ENCODE measurements at regions of chr7 and their contacts with region 1.

Region 1: DNA sequence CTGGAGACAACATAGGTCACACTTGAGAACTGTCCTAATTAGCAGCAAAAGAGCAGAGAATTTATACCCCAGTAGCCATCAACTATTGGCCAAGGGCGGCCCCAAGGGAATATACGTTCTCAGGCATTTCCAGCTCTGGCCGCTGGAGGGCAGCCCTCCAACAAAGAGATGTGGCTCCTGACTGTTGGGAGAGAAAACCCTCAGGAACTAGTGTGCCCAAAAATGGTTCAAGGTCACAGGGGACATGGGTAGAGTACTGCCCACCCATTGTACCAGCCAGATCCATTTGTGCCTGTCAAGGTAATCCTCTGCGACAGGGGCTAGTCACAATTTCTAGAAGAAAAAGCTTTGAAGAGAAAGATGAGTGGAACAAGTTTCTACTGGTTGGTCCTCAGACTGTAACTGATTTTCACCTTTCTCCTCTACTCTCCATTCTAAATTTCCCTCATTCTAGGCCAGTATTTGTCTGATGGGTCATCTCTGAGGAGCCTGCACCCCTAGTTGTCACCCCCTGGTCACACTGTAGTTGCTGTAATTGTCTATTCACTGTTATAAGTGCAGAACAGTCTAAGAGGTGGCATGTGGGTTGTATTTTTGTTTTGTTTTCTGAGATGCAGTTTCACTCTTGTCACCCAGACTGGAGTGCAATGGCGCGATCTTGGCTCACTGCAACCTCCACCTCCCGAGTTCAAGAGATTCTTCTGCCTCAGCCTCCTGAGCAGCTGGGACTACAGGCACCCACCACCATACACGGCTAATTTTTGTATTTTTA is 14.7 kb upstream of the C7orf33 start:
- DNase-seq: peak; percentile 76
- H3K4me3 Mint-ChIP-seq: no peak overlapping the region
- H3K27ac Mint-ChIP-seq: no peak overlapping the region
- H3K4me1 Mint-ChIP-seq: no peaks in the 10 kb centered on the region
- H3K27me3 Mint-ChIP-seq: no peaks in the 10 kb centered on the region
- CTCF ChIP-seq: peak; percentile 87

Region 2: GRCh38 chr7:148398844-148399373 is 176.9 kb before region 1 on chr7:
- CTCF ChIA-PET with region 1: no interaction called
- POLR2A ChIA-PET with region 1: no interaction called
- intact Hi-C with region 1: no loop called
- DNase-seq: peak; percentile 3
- H3K4me3 Mint-ChIP-seq: no peak overlapping the region
- H3K27ac Mint-ChIP-seq: no peak overlapping the region
- H3K4me1 Mint-ChIP-seq: peaks cover 6% of the 10 kb centered on the region
- H3K27me3 Mint-ChIP-seq: peaks cover 18% of the 10 kb centered on the region
- CTCF ChIP-seq: no peak

Region 3: GRCh38 chr7:148503875-148504487 is 71.8 kb before region 1 on chr7:
- CTCF ChIA-PET with region 1: interaction called, 8 read pairs
- POLR2A ChIA-PET with region 1: no interaction called
- intact Hi-C with region 1: loop called (anchors 1 kb)
- DNase-seq: peak; percentile 42
- H3K4me3 Mint-ChIP-seq: no peak overlapping the region
- H3K27ac Mint-ChIP-seq: no peak overlapping the region
- H3K4me1 Mint-ChIP-seq: peaks cover 4% of the 10 kb centered on the region
- H3K27me3 Mint-ChIP-seq: peaks cover 22% of the 10 kb centered on the region
- CTCF ChIP-seq: peak; percentile 56

Region 4: DNA sequence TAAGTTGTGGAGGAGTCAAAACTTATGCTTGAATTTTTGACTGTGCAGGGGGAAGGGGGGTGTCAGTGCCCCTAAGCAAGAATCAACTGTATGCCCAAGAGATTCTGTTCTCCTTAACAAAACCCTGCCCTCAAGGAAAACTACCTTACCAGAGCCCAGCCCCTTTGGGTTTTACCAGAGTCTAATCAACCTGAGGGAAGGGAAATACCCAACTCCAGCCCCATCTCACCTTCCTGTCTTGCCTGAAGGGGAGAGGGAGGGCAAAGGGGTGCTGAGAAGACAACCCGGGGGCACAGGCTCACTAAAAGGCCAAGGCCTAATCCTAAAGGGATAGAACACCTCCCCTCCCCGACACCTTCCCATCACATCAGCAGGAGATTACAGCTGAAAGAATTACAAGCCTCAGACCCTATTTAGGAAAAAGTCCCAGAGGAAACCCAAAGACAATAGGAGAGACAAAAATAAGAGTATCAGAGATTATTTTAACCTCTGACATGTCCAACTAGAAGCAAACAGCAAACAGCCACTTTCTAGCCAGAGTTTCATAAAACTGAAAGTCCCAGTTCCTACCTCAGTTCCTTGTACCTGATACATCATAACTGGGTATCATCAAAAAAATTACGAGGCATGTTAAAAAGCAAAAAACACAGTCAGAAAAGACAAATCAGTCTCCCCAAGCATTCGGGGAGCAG is 12.1 kb before region 1 on chr7:
- CTCF ChIA-PET with region 1: interaction called, 33 read pairs
- POLR2A ChIA-PET with region 1: interaction called, 5 read pairs
- intact Hi-C with region 1: no loop called
- DNase-seq: no peak
- H3K4me3 Mint-ChIP-seq: peak overlapping the region; percentile 44
- H3K27ac Mint-ChIP-seq: peak overlapping the region; percentile 84
- H3K4me1 Mint-ChIP-seq: peaks cover 9% of the 10 kb centered on the region
- H3K27me3 Mint-ChIP-seq: no peaks in the 10 kb centered on the region
- CTCF ChIP-seq: no peak

Region 5: DNA sequence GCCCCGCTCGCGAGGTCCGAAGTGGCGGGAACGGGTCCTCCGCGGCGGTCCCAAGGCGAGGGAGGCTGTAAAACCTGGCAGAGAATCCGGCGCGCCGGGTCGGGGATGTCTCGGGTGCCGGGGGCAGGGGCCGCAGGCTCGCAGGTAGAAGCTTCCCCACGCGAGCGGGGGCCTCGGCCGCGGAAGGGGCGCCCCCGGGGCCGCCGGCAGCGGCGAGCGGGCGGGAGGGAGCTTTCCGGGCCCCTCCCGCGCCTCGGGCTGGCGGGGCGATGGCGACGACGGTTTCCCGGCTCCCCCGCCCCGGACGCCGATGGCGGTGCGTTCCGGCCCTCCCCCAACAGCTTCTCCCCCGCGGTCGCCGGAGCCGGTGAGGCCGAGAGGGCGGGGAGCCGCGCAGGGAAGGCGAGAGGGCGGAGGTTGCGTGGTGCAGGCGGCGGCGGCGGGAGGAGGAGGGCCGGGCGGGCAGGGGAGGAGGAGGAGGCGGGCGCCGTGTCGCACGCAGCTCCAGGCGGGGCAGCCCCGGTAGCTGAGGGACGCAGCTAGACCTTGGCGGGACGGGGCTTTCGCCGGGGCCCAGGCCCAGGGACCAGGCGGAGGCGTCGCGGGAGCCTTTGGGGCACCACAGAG is 122.7 kb after region 1 on chr7 and contains the start of gene CUL1:
- CTCF ChIA-PET with region 1: interaction called, 4 read pairs
- POLR2A ChIA-PET with region 1: no interaction called
- intact Hi-C with region 1: loop called (anchors 5 kb)
- DNase-seq: peak; percentile 83
- H3K4me3 Mint-ChIP-seq: peak within 1 kb of the TSS; percentile 85
- H3K27ac Mint-ChIP-seq: peak within 1 kb of the TSS; percentile 71
- H3K4me1 Mint-ChIP-seq: peaks cover 46% of the 10 kb centered on the region
- H3K27me3 Mint-ChIP-seq: no peaks in the 10 kb centered on the region
- CTCF ChIP-seq: no peak
- total RNA-seq, gene CUL1: 41.2 and 49.2 TPM in 2 replicates

Region 6: DNA sequence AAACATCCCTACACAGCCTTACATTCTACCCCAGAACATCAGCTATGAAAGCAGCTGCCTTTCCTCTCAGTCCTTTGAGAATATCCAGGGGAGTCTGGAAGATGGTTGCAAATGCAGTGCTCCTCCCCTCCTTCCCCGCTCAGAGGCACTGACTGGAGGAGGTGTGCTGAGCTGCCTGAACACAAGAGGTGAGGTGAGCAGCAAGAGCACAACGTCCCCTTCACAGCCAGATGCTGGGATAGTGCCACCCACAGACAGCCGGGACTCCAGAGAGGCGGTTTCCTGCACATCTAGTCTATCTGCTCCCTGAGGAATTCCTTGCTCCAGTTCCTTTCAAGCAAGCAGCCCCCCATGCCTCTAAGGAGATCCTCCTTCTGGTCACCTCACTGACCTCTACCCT is 234.0 kb after region 1 on chr7:
- CTCF ChIA-PET with region 1: interaction called, 3 read pairs
- POLR2A ChIA-PET with region 1: no interaction called
- intact Hi-C with region 1: loop called (anchors 10 kb)
- DNase-seq: no peak
- H3K4me3 Mint-ChIP-seq: no peak overlapping the region
- H3K27ac Mint-ChIP-seq: no peak overlapping the region
- H3K4me1 Mint-ChIP-seq: no peaks in the 10 kb centered on the region
- H3K27me3 Mint-ChIP-seq: no peaks in the 10 kb centered on the region
- CTCF ChIP-seq: no peak

Measured in MCF 10A (cell line).